Activated CD4-positive, alpha-beta T cell treated with anti-CD3 and anti-CD28 coated beads, Interleukin-2, amount 10 ng/mL, durations not matched to agents 24 days and 14 days (primary cell): ENCODE measurements at regions of chr5 and their contacts with region 1.

Region 1: GRCh38 chr5:119355685-119356611 is at the start of gene TNFAIP8:
- DNase-seq: peak; percentile 88
- H3K4me3 Mint-ChIP-seq: peak within 1 kb of the TSS; percentile 100
- H3K27ac Mint-ChIP-seq: peak within 1 kb of the TSS; percentile 97
- H3K4me1 Mint-ChIP-seq: peaks cover 61% of the 10 kb centered on the region
- H3K27me3 Mint-ChIP-seq: no peaks in the 10 kb centered on the region
- total RNA-seq, gene TNFAIP8: 188 and 193 TPM in 2 replicates

Region 2: GRCh38 chr5:119070828-119071572 is 284.9 kb before region 1 on chr5 and contains the start of gene DMXL1:
- intact Hi-C with region 1: loop called (anchors 5 kb)
- DNase-seq: peak; percentile 99
- H3K4me3 Mint-ChIP-seq: peak within 1 kb of the TSS; percentile 94
- H3K27ac Mint-ChIP-seq: peak within 1 kb of the TSS; percentile 95
- H3K4me1 Mint-ChIP-seq: peaks cover 30% of the 10 kb centered on the region
- H3K27me3 Mint-ChIP-seq: no peaks in the 10 kb centered on the region
- total RNA-seq, gene DMXL1: 22.4 and 25.6 TPM in 2 replicates

Region 3: DNA sequence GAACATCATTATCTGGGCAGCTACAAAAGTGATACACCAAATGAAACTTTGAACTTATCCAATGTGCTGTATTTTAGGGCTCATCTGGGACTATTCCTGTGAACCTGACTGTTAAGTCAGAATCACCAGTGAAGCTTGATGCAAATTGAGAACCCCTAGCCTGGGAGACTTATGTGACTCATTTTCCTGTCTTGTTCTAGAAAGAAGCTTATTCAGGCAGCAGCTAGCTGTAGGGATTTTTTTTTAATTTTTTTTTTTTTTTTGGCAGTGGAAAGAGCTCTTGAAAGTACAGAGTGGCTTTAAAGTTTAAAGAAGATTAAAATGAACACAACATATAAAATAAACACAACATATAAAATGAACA is 81.2 kb before region 1 on chr5:
- intact Hi-C with region 1: loop called (anchors 1 kb)
- DNase-seq: peak; percentile 78
- H3K4me3 Mint-ChIP-seq: peak overlapping the region; percentile 95
- H3K27ac Mint-ChIP-seq: peak overlapping the region; percentile 95
- H3K4me1 Mint-ChIP-seq: peaks cover 89% of the 10 kb centered on the region
- H3K27me3 Mint-ChIP-seq: no peaks in the 10 kb centered on the region

Region 4: GRCh38 chr5:119367502-119368237 is 11.7 kb after region 1 on chr5:
- intact Hi-C with region 1: loop called (anchors 1 kb)
- DNase-seq: peak; percentile 75
- H3K4me3 Mint-ChIP-seq: peak overlapping the region; percentile 78
- H3K27ac Mint-ChIP-seq: peak overlapping the region; percentile 96
- H3K4me1 Mint-ChIP-seq: peaks cover 69% of the 10 kb centered on the region
- H3K27me3 Mint-ChIP-seq: no peaks in the 10 kb centered on the region

Region 5: DNA sequence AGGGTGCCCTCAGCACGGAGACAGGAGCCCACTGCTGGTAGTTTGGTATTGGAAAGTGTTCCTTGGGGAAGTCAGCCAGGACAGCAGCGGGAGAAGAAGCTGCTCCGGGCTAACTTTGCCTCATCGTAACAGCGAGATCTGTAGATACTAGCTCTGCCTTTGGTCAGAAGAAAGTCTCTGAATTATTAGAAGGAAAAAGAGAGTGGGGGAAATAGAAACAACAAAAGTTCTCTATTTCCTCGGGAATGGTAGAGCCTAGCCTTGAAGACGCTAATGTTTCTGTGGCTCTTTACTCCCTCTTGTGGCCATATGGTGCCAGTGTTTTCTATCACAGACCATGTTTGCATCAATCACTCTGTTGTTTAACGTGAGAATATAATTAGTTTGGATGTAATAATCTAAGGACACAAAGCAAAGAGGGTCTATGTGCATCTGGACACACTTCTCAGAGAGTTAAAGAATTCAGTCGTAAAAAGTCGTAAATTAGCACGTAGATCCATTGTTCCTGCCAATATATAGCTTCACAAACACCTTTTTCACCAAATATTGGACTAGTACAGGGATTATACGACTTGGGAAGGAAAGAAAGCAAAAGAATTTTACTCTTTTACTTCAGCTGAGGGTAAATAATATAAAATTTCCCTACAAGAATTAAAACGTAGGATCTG is 56.1 kb after region 1 on chr5:
- intact Hi-C with region 1: loop called (anchors 2 kb)
- DNase-seq: peak; percentile 87
- H3K4me3 Mint-ChIP-seq: peak overlapping the region; percentile 85
- H3K27ac Mint-ChIP-seq: peak overlapping the region; percentile 70
- H3K4me1 Mint-ChIP-seq: peaks cover 32% of the 10 kb centered on the region
- H3K27me3 Mint-ChIP-seq: peaks cover 10% of the 10 kb centered on the region

Region 6: DNA sequence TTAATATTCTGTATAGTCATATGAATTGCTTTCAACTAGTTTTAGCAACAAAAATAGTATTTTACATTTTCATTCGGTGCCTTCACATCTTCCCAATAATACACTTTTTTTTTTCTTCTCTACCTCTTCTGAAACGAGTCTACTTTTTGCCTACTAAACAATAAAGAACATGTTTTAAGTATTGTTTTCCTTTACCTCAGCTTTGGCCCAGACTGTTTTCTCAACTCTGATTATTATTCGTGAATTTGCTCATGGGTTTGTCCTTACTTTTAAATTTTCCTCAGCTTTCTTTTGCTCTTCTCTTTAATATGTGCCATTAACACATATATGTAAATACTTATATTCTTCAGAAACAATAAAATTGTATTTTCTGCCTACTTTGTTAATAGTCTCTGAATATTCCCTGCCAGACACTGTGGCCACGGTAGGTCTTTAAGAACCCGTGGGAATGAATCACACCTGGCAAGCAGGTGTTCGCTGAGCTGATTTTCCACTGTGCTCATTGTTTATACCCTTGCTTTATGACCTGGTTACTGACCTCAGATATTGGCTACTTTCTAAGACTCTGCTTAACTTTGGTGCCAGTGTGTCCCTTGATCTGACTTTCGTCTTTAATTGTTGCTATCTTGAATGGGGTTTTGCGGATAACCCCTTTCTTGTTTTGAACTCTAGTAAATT is 322.5 kb after region 1 on chr5:
- intact Hi-C with region 1: no loop called
- DNase-seq: no peak
- H3K4me3 Mint-ChIP-seq: no peak overlapping the region
- H3K27ac Mint-ChIP-seq: no peak overlapping the region
- H3K4me1 Mint-ChIP-seq: no peaks in the 10 kb centered on the region
- H3K27me3 Mint-ChIP-seq: no peaks in the 10 kb centered on the region